ENCODE measurements at regions of chr9 and their contacts with region 1.

Region 1: DNA sequence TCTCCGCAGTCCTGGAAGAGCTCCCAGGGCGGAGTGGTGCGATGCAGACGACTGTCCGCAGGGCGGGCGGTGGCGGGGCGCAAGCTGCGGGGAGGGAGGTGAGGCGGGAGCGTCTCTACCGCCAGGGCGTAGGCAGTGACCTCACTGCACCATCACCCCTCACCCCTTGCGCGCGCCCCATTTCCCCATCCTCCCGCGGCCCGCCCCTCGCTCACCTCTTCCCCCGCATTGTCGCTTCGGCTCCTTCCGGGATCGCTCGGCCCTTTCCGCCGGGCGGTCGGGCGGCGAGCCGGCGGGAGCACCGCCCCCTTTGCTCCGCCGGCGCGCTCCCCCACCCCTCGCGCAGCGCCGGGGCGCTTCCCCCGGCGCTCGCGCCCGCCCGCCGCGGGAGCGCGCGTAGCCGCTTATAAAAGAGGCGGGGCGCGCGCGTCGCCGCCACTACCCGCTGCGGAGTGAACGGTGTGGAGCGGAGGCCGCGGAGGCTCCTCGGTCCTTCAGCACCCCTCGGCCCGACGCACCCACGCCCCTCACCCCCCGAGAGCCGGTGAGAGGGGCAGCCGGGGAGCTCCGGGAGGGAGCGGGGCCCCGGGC is at the start of gene SPTAN1:
- DNase-seq: peak; percentile 85
- H3K4me3 Mint-ChIP-seq: no peak within 1 kb of the TSS
- H3K27ac Mint-ChIP-seq: peak within 1 kb of the TSS; percentile 85
- H3K4me1 Mint-ChIP-seq: peaks cover 6% of the 10 kb centered on the region
- H3K27me3 Mint-ChIP-seq: no peaks in the 10 kb centered on the region
- CTCF ChIP-seq: no peak
- total RNA-seq, gene SPTAN1: 332 and 344 TPM in 2 replicates

Region 2: DNA sequence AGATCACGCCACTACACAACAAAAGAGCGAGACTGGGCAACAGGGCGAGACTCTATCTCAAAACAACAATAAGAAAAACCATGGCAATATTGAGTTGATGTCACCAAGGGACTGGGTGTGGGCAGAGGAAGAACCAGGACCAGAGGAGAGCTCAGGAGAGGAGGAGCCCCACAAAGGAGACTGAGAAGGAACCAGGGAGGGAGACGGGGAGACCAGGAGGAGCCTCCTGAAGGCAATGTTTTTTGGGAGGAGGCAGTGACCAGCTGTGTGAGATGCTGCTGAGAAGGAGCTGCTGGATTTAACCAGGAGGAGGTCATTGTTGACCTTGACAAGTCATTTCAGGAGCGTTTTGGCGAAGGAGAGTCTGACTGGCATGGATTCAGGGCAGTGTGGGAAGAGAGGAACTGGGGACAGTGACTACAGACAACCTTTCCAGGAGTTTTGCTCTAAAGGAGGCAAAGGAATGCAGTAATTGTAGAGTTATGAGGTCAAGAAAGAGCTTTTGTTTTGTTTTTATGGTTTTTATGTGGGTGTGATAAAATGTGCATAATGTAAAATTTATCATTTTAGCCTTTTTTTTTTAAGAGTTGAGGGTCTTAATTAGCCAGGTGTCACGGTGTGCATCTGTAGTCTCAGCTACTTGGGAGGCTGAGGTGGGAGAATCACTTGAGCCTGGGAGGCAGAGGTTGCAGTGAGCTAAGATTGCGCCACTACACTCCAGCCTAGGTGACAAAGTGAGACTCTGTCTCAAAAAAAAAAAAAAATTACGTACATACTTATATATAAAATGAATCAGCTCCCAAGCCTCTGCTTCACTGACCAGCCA is 247.9 kb before region 1 on chr9:
- CTCF ChIA-PET with region 1: no interaction called
- intact Hi-C with region 1: loop called (anchors 10 kb)
- DNase-seq: no peak
- H3K4me3 Mint-ChIP-seq: no peak overlapping the region
- H3K27ac Mint-ChIP-seq: peak overlapping the region; percentile 42
- H3K4me1 Mint-ChIP-seq: no peaks in the 10 kb centered on the region
- H3K27me3 Mint-ChIP-seq: no peaks in the 10 kb centered on the region
- CTCF ChIP-seq: no peak